MCF 10A (cell line): ENCODE measurements at regions of chr12 and their contacts with region 1.

Region 1: DNA sequence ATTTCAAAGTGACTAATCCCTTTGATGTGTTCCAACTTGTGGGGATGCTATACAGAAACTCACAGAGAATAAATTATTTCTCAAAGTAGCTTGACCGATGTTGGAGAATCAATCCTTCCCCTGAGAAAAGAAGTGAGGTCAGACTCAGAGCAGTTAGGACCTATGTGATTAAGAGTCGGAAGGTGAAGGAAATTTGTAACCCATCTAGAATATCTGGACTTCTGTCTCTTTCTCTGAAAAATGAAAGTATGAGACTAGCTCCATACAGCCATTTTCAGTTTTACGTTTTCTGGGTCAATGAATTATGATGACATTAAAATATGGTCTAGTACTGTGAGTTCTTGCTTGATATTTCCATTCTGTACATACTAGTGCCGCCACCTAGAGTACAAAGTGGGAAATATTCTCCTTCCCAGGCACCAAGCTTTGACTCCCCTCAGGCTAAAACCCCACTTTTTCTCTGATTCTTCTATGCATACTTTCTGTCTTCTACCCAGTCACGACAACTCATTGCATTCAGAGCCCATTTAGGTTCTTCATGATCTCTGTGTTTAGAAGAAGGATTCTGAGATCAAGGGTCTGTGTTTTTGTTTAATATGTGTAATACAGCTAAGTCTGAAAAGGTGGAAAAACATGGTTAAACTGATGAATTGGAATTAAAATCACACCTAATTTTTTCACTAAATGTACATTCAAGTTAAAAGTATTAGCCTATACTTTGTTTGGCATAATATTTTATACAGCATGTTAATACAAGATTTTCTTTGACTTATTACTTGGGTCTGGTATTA is 6.9 kb upstream of the NTS start:
- DNase-seq: peak; percentile 75
- H3K4me3 Mint-ChIP-seq: peak overlapping the region; percentile 15
- H3K27ac Mint-ChIP-seq: no peak overlapping the region
- H3K4me1 Mint-ChIP-seq: no peaks in the 10 kb centered on the region
- H3K27me3 Mint-ChIP-seq: no peaks in the 10 kb centered on the region
- CTCF ChIP-seq: peak; percentile 86

Region 2: GRCh38 chr12:85468356-85469157 is 398.6 kb before region 1 on chr12:
- CTCF ChIA-PET with region 1: interaction called, 40 read pairs
- POLR2A ChIA-PET with region 1: no interaction called
- intact Hi-C with region 1: loop called (anchors 1 kb)
- DNase-seq: peak; percentile 78
- H3K4me3 Mint-ChIP-seq: peak overlapping the region; percentile 69
- H3K27ac Mint-ChIP-seq: peak overlapping the region; percentile 59
- H3K4me1 Mint-ChIP-seq: peaks cover 21% of the 10 kb centered on the region
- H3K27me3 Mint-ChIP-seq: no peaks in the 10 kb centered on the region
- CTCF ChIP-seq: peak; percentile 85

Region 3: DNA sequence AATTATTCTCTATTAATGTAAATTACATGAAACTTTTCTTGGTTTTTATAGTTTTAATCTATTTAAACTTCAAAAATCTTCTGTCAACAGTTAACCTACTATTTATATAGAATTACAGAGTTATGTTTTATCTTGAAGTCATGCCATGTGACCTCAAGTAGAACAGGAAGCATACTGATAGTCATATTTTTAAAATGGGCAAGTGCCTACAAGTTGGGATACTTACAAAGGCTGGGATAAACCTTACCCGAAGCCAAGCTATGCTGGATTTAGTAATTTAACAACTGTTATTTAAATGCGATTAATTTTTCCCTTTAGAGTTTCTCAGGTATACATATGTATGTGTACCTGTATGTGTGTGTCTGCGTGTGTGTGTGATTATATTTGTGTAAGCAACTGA is 297.9 kb before region 1 on chr12:
- CTCF ChIA-PET with region 1: interaction called, 204 read pairs
- POLR2A ChIA-PET with region 1: interaction called, 10 read pairs
- intact Hi-C with region 1: no loop called
- DNase-seq: peak; percentile 7
- H3K4me3 Mint-ChIP-seq: no peak overlapping the region
- H3K27ac Mint-ChIP-seq: no peak overlapping the region
- H3K4me1 Mint-ChIP-seq: no peaks in the 10 kb centered on the region
- H3K27me3 Mint-ChIP-seq: no peaks in the 10 kb centered on the region
- CTCF ChIP-seq: no peak

Region 4: GRCh38 chr12:85588221-85588620 is 279.0 kb before region 1 on chr12:
- CTCF ChIA-PET with region 1: interaction called, 16 read pairs
- POLR2A ChIA-PET with region 1: no interaction called
- intact Hi-C with region 1: no loop called
- DNase-seq: no peak
- H3K4me3 Mint-ChIP-seq: no peak overlapping the region
- H3K27ac Mint-ChIP-seq: no peak overlapping the region
- H3K4me1 Mint-ChIP-seq: no peaks in the 10 kb centered on the region
- H3K27me3 Mint-ChIP-seq: no peaks in the 10 kb centered on the region
- CTCF ChIP-seq: no peak

Region 5: GRCh38 chr12:85836197-85837090 is 30.7 kb before region 1 on chr12 and contains the start of gene RASSF9:
- CTCF ChIA-PET with region 1: interaction called, 22 read pairs
- POLR2A ChIA-PET with region 1: interaction called, 5 read pairs
- intact Hi-C with region 1: no loop called
- DNase-seq: peak; percentile 91
- H3K4me3 Mint-ChIP-seq: peak within 1 kb of the TSS; percentile 85
- H3K27ac Mint-ChIP-seq: peak within 1 kb of the TSS; percentile 96
- H3K4me1 Mint-ChIP-seq: peaks cover 19% of the 10 kb centered on the region
- H3K27me3 Mint-ChIP-seq: no peaks in the 10 kb centered on the region
- CTCF ChIP-seq: no peak
- total RNA-seq, gene RASSF9: 1.5 and 2.1 TPM in 2 replicates

Region 6: DNA sequence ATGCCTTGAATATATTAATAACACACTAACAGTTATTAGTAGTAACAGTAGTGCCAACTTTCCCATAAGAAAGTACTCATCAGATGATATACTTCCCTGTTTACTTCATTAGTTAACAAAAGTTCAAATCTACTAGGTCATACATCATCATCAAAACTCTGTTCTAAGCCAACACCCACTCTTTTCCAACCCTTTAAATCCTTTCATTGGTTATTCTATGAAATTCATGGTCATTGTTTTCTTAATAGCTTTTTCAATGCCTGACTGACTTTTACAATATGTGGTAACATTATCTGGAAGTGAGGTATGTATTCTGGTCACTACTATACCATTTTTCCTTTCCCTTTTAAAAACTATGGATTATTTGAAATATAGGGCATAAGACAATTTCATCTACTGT is 16.6 kb after region 1 on chr12:
- CTCF ChIA-PET with region 1: interaction called, 15 read pairs
- POLR2A ChIA-PET with region 1: no interaction called
- intact Hi-C with region 1: no loop called
- DNase-seq: no peak
- H3K4me3 Mint-ChIP-seq: no peak overlapping the region
- H3K27ac Mint-ChIP-seq: no peak overlapping the region
- H3K4me1 Mint-ChIP-seq: no peaks in the 10 kb centered on the region
- H3K27me3 Mint-ChIP-seq: no peaks in the 10 kb centered on the region
- CTCF ChIP-seq: no peak

Region 7: DNA sequence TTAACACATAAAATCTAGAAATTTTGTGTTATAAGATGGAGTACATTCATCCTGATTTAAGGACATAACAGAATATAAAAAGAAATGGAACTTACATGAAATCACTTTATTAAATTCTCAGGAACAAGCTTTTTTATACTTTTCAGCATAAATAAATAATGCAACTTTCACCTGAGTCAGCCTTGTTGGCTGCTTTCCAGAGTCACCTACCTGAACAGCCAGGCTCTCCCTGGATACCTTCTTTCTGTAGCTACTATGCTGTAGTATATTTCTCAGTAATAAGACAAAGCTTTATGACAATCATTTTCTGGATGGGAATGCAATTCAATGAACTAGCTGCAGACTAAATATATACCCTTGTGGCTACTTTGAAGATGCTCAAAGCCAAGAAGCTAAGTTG is 118.8 kb after region 1 on chr12:
- CTCF ChIA-PET with region 1: no interaction called
- POLR2A ChIA-PET with region 1: no interaction called
- intact Hi-C with region 1: no loop called
- DNase-seq: peak; percentile 46
- H3K4me3 Mint-ChIP-seq: no peak overlapping the region
- H3K27ac Mint-ChIP-seq: no peak overlapping the region
- H3K4me1 Mint-ChIP-seq: no peaks in the 10 kb centered on the region
- H3K27me3 Mint-ChIP-seq: no peaks in the 10 kb centered on the region
- CTCF ChIP-seq: no peak